Left cardiac atrium (tissue), 4 donors: ENCODE measurements at regions of chr20 and their contacts with region 1.

Region 1: DNA sequence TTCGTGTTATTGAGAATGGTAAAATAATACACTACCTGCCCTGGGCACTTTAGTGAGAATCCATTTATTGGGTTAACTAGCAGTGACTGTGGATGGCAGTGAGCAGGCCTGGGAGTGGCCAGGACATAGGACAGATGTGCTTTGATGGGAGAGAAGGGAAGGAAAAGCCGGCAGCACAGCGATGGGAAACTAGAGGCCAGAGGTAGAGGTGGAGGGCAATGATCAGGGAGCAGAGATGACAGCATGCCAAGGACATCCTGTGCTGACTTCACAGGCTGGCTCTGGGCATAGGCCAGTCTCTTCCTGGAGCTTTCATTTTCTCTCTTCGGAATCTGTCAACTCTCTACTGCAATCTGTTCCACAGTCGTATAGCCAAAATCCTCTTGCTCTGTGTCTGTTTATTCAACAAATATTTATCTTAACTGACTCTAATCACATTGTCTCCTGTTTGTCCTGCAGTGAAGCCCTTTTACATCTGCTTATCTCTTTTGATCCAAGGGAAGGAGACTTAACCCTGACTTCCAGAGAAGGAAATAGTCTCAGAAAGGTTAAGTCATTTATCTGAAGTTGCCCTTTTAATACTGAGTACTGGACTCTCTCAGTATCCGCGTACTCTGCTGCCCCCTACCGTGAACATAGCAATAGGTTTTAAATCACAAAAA is 18.4 kb upstream of the MMP24 start:
- DNase-seq: peak; percentile 86
- ATAC-seq: peak; percentile 95 to 96

Region 2: GRCh38 chr20:35146920-35147574 is 61.0 kb before region 1 on chr20 and contains the start of gene EDEM2:
- intact Hi-C with region 1: loop called (anchors 2 to 5 kb)
- DNase-seq: peak; percentile 96
- ATAC-seq: peak; percentile 95 to 96
- total RNA-seq, gene EDEM2: 16.6 to 25.6 TPM

Region 3: DNA sequence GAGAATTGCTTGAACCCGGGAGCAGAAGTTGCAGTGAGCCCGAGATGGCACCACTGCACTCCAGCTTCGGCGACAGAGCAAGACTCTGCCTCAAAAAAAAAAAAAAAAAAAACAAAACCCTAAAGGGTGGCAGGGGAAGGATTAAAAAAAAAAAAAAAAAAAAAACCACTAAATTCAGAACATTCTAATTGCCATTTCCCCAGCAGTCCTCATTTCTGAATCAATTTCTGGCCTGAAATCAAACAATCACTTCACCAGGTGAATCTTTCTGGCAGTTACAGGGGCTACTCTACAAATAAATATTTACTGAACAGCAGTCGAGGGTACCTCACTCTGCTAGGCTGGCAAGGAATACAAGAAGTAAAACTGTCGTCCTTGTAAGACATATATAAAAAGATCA is 202.5 kb after region 1 on chr20:
- intact Hi-C with region 1: no loop called
- DNase-seq: no peak
- ATAC-seq: no peak